Tibial artery (tissue), 4 donors: ENCODE measurements at regions of chr19 and their contacts with region 1.

Region 1: GRCh38 chr19:19053508-19054314 is 10.1 kb upstream of the SLC25A42 start:
- DNase-seq: no peak
- H3K4me3 ChIP-seq: no peak overlapping the region
- H3K27ac ChIP-seq: no peak overlapping the region
- H3K4me1 ChIP-seq: no peaks in the 10 kb centered on the region
- H3K27me3 ChIP-seq: no peaks in the 10 kb centered on the region
- CTCF ChIP-seq: peak; percentile 61 to 68

Region 2: GRCh38 chr19:19115954-19116353 is 62.2 kb after region 1 on chr19:
- intact Hi-C with region 1: loop called (anchors 5 kb)
- DNase-seq: no peak
- H3K4me3 ChIP-seq: no peak overlapping the region
- H3K27ac ChIP-seq: no peak overlapping the region
- H3K4me1 ChIP-seq: no peaks in the 10 kb centered on the region
- H3K27me3 ChIP-seq: no peaks in the 10 kb centered on the region
- CTCF ChIP-seq: peak; percentile 25 to 31

Region 3: DNA sequence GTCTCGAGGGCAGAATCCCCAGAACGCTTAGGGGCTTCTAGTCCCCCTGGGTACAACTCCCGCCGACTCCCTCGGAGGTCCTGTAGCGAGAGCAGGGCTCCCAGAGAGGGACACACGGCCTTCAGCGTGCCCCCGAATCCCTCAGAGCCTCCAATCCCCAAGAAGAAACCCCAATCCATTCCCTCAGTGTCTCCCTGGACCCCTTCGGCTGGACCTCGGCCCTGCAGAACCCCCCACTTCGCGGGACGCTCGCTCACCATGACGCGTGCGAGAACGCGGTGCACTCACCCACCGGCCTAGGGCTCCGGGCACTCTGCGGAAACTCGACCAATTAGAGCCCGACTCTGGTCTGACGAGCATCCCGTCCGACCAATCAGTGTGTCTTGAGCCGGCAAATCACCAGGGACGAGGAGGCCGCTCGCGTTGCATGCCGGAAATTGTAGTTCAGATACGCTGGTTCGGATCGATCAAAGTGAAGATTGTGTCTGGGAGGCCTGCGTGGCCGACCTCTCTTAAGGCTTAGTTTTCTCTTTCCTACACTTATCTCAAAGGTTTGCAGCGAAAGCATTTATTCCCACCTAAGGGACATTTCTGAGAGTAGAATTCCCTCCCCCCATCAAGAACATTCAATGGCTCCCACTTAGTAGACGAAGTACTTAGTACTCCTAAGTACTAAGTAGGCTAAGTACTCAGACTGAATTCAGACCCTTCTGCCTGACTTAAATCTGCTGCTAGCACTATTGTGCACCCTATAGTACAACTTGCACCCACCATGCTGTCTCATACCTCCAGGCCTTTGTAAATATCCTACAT is 84.7 kb after region 1 on chr19 and contains the start of gene TMEM161A:
- intact Hi-C with region 1: loop called (anchors 5 kb)
- DNase-seq: peak; percentile 97 to 99
- H3K4me3 ChIP-seq: peak within 1 kb of the TSS; percentile 79 to 82
- H3K27ac ChIP-seq: peak within 1 kb of the TSS; percentile 78 to 84
- H3K4me1 ChIP-seq: peaks cover 0 to 18% (median 8%) of the 10 kb centered on the region in 4 donors
- H3K27me3 ChIP-seq: no peaks in the 10 kb centered on the region
- CTCF ChIP-seq: peak in 1 of 2 experiments; percentile 7

Region 4: GRCh38 chr19:19179548-19180441 is 126.1 kb after region 1 on chr19:
- intact Hi-C with region 1: loop called (anchors 5 kb)
- DNase-seq: no peak
- H3K4me3 ChIP-seq: no peak overlapping the region
- H3K27ac ChIP-seq: no peak overlapping the region
- H3K4me1 ChIP-seq: peaks cover 0 to 6% (median 0%) of the 10 kb centered on the region in 4 donors
- H3K27me3 ChIP-seq: no peaks in the 10 kb centered on the region
- CTCF ChIP-seq: no peak

Region 5: GRCh38 chr19:19579533-19580361 is 526.0 kb after region 1 on chr19:
- intact Hi-C with region 1: no loop called
- DNase-seq: no peak
- H3K4me3 ChIP-seq: no peak overlapping the region
- H3K27ac ChIP-seq: no peak overlapping the region
- H3K4me1 ChIP-seq: no peaks in the 10 kb centered on the region
- H3K27me3 ChIP-seq: no peaks in the 10 kb centered on the region
- CTCF ChIP-seq: no peak